Right cardiac atrium (tissue), 5 donors: ENCODE measurements at regions of chr2 and their contacts with region 1.

Region 1: GRCh38 chr2:43269074-43269572 is 42.7 kb upstream of the ZFP36L2 start:
- DNase-seq: peak; percentile 93 to 96 (median 94)
- ATAC-seq: peak; percentile 86 to 92
- H3K4me3 ChIP-seq: no peak overlapping the region
- H3K27ac ChIP-seq: peak overlapping the region; percentile 95
- H3K4me1 ChIP-seq: peaks cover 29% of the 10 kb centered on the region
- H3K27me3 ChIP-seq: no peaks in the 10 kb centered on the region

Region 2: DNA sequence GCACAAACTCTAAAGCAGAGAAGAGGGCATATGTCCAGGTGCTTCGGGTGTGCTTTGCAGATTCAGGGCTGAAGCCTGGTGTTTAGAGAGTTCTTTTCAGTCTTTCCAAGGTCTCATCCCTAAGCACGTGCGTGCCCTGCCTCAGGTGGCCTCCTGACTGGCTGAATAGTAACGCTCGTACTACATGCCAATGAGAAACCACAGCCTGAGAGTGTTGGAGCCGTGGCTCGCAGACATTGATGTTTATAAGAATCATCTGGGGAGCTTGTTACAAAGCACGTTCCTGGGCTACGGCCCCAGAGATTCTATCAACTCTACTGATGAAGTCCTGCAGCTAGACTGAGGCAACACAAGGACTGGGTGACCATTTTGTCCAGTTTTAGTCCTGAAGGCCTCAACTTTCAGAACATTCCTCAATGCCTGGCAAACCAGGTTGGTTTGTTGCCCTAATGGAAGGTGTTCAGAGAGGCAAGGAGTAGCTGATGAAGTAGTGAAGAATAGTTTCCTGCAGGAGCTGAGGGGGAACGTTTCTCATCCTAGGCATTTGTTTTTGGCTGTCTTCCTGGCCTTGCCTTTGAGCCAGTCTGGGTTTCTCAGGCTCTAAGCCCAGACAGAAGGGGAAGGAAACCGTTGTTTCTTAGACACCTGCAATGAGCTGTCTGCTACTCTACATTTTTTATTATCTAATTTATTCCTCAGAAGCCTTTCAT is 445.2 kb before region 1 on chr2:
- intact Hi-C with region 1: no loop called
- DNase-seq: no peak
- ATAC-seq: no peak
- H3K4me3 ChIP-seq: no peak overlapping the region
- H3K27ac ChIP-seq: no peak overlapping the region
- H3K4me1 ChIP-seq: no peaks in the 10 kb centered on the region
- H3K27me3 ChIP-seq: no peaks in the 10 kb centered on the region

Region 3: DNA sequence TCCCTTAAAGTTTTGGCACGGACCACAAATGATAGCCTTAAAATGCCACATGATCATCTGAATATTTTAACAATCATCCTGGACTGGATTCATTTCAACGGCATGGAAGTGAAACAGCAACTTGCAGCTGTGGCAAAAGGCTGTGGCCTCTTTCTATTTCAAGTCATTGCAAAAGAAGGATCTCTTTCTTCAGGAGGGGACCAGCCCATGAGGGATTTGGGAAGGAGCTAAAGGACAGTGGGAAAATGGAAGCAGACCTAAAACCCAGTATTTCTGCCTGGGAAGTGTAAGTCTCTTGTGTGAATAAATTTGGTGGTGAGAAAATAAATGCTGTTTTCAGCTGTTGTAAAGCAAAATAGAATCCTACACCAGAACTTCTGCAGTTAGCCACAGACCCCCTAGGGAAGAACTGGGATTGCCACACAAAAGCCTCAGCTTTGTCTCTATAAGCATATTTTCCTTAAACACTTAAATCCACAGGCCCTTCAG is 64.6 kb after region 1 on chr2:
- intact Hi-C with region 1: loop called in 1 of 4 experiments (anchors 5 kb)
- DNase-seq: peak in 1 of 3 donors; percentile 41
- ATAC-seq: peak; percentile 50 to 53
- H3K4me3 ChIP-seq: peak overlapping the region; percentile 13
- H3K27ac ChIP-seq: peak overlapping the region; percentile 97
- H3K4me1 ChIP-seq: peaks cover 13% of the 10 kb centered on the region
- H3K27me3 ChIP-seq: no peaks in the 10 kb centered on the region